ENCODE measurements at regions of chr10 and their contacts with region 1.

Region 1: GRCh38 chr10:7054900-7055299 is 355.9 kb downstream of the SFMBT2 start:
- DNase-seq: peak in 1 of 2 experiments; percentile 15
- H3K4me3 ChIP-seq: no peak overlapping the region
- H3K27ac ChIP-seq: no peak overlapping the region
- H3K4me1 ChIP-seq: peaks cover 0 to 3% (median 0%) of the 10 kb centered on the region in 4 experiments; a peak in 1 of 7 replicates
- H3K27me3 ChIP-seq: no peaks in the 10 kb centered on the region
- CTCF ChIP-seq: peak; percentile 11 to 62 (median 48)
- EP300 ChIP-seq: no peak
- POLR2A ChIP-seq: no peak
- RAD21 ChIP-seq: peak; percentile 52 to 70

Region 2: DNA sequence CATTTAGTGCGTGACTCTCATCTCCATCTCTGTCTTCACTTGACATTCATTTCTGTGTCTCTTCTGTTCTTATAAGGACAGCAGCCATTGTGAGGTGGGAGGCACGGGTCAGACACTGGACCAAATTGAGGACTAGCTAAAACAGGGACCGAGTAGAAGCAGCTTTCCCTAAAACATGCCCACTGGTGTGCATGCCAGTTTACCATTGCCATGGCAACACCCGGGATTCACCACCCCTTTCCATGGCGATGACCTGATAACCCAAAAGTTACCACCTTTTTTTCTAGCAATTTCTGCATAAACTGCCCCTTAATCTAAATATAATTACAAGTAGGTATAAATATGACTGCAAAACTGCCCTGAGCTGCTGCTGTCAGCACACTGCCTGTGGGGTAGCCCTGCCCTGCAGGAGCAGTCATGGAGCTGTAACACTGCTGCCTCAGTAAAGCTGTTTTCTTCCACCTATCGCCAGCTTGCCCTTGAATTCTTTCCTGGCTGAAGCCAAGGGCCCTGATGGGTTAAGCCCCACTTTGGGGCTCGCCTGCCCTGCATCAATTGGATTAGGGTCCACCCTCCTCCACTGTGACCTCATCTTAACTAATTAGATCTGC is 13.0 kb before region 1 on chr10:
- CTCF ChIA-PET with region 1: interaction called, 21 read pairs
- POLR2A ChIA-PET with region 1: no interaction called
- DNase-seq: no peak
- H3K4me3 ChIP-seq: no peak overlapping the region
- H3K27ac ChIP-seq: no peak overlapping the region
- H3K4me1 ChIP-seq: no peaks in the 10 kb centered on the region
- H3K27me3 ChIP-seq: no peaks in the 10 kb centered on the region
- CTCF ChIP-seq: no peak
- EP300 ChIP-seq: no peak
- POLR2A ChIP-seq: no peak
- RAD21 ChIP-seq: no peak

Region 3: GRCh38 chr10:7069701-7070100 is 14.8 kb after region 1 on chr10:
- CTCF ChIA-PET with region 1: interaction called, 11 read pairs
- POLR2A ChIA-PET with region 1: no interaction called
- DNase-seq: no peak
- H3K4me3 ChIP-seq: no peak overlapping the region
- H3K27ac ChIP-seq: no peak overlapping the region
- H3K4me1 ChIP-seq: no peaks in the 10 kb centered on the region
- H3K27me3 ChIP-seq: no peaks in the 10 kb centered on the region
- CTCF ChIP-seq: no peak
- EP300 ChIP-seq: no peak
- POLR2A ChIP-seq: no peak
- RAD21 ChIP-seq: no peak

Region 4: DNA sequence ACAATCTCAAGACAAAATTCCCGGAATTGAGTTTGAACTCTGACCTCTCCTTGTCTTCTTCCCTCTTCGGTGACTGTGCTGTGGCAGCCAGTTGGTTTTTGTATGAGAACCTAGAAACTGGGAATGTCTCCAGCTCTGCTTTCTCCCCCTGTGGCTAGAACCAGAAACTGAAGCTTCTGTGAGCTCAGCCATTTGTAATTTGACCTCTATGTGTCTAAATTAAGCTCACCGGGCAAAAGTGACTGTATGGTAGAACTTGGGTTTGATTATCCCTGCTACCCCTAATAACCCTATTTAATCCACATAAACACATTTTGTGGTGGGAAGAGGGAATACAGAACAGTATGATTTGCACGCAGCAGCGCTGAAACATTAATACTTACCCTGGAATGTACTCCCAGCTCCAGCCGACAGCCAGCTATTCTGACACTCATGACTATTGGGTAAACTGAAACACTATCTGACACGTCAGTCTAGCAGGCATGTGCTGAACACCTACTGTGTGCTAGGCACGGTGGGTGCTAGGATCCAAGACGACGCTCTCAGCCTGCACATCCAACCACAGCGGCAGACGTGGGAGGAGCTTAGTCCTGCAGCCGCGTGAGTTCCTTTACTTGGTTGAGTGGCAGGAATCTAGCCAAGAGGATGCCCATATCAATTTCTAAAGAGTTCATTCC is 31.2 kb after region 1 on chr10:
- CTCF ChIA-PET with region 1: interaction called, 14 read pairs
- POLR2A ChIA-PET with region 1: no interaction called
- DNase-seq: no peak
- H3K4me3 ChIP-seq: no peak overlapping the region
- H3K27ac ChIP-seq: no peak overlapping the region
- H3K4me1 ChIP-seq: peaks cover 2 to 16% (median 11%) of the 10 kb centered on the region in 4 experiments; a peak in 5 of 7 replicates
- H3K27me3 ChIP-seq: no peaks in the 10 kb centered on the region
- CTCF ChIP-seq: peak in 1 of 3 experiments; percentile 39; a peak in 2 of 4 replicates
- EP300 ChIP-seq: no peak
- POLR2A ChIP-seq: no peak
- RAD21 ChIP-seq: peak; percentile 37 to 49; a peak in 3 of 4 replicates

Region 5: DNA sequence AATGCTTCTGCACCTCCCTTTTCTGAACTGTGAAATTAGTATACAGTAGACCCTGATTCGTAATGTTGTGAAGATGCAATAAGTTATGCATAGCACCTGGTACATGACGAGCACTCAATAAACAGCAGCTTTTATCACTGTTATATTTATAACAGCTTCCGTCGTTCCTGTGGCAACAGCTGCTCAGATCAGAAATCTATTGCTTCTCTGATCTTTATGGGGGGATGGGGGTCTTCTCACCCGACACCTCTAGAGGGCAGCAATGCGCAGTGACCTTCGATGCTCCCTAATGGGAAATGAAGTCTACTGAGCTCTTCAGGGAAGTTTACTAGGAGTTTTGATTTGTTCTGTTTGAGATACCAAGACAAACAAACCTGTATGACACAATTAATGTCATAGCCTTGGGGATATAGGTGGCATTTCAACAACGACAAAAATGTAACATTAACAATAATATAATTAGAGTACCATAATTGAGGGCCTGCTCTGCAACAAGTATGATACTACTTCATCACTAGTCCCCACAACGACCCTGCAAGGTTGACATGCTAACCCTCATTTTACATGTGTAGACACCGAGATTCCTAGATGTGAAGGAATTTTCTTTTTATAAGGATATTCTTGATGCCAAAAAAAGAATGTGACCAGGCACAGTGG is 66.4 kb after region 1 on chr10:
- CTCF ChIA-PET with region 1: interaction called, 12 read pairs
- POLR2A ChIA-PET with region 1: no interaction called
- DNase-seq: peak; percentile 15 to 85
- H3K4me3 ChIP-seq: no peak overlapping the region
- H3K27ac ChIP-seq: no peak overlapping the region
- H3K4me1 ChIP-seq: no peaks in the 10 kb centered on the region
- H3K27me3 ChIP-seq: no peaks in the 10 kb centered on the region
- CTCF ChIP-seq: peak; percentile 71 to 84 (median 76)
- EP300 ChIP-seq: no peak
- POLR2A ChIP-seq: no peak
- RAD21 ChIP-seq: peak; percentile 84 to 86

Measured in H1 (cell line).